Pancreas (tissue), 10 donors: ENCODE measurements at regions of chr10 and their contacts with region 1.

Region 1: DNA sequence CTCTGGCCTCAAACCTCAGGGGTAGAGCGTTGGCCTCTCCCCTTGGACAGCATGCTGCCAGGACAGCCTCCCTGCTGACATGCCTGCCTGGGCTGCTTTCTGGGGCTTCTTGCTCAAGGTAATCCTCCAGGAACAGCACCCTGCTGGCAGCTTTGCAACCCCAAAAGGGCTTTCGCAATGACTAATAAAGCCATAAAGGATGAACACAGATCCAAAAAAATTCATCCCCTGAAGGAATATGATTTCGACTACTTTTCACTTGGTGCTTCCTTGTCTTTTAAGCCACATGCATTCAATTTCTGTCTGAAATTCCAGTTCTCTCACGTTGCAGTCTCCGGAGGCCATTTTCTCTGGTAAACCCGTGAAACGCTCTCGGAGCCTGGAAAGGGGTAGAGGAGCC is 15.1 kb upstream of the SH3PXD2A start:
- DNase-seq: no peak
- ATAC-seq: no peak
- H3K4me3 ChIP-seq: no peak overlapping the region
- H3K27ac ChIP-seq: no peak overlapping the region
- H3K4me1 ChIP-seq: no peaks in the 10 kb centered on the region
- H3K27me3 ChIP-seq: no peaks in the 10 kb centered on the region
- CTCF ChIP-seq: no peak

Region 2: GRCh38 chr10:103618575-103619423 is 251.7 kb before region 1 on chr10:
- intact Hi-C with region 1: loop called in 1 of 3 experiments (anchors 10 kb)
- DNase-seq: peak in 5 of 6 donors; percentile 34 to 61 (median 55)
- ATAC-seq: peak; percentile 4 to 59 (median 36)
- H3K4me3 ChIP-seq: no peak overlapping the region
- H3K27ac ChIP-seq: no peak overlapping the region
- H3K4me1 ChIP-seq: peaks cover 0 to 7% (median 0%) of the 10 kb centered on the region in 3 donors
- H3K27me3 ChIP-seq: no peaks in the 10 kb centered on the region
- CTCF ChIP-seq: no peak